Activated CD8-positive, alpha-beta T cell treated with anti-CD3 and anti-CD28 coated beads, Interleukin-2, amount 10 ng/mL, durations not matched to agents 7 days and 5 days (primary cell): ENCODE measurements at regions of chr2 and their contacts with region 1.

Region 1: DNA sequence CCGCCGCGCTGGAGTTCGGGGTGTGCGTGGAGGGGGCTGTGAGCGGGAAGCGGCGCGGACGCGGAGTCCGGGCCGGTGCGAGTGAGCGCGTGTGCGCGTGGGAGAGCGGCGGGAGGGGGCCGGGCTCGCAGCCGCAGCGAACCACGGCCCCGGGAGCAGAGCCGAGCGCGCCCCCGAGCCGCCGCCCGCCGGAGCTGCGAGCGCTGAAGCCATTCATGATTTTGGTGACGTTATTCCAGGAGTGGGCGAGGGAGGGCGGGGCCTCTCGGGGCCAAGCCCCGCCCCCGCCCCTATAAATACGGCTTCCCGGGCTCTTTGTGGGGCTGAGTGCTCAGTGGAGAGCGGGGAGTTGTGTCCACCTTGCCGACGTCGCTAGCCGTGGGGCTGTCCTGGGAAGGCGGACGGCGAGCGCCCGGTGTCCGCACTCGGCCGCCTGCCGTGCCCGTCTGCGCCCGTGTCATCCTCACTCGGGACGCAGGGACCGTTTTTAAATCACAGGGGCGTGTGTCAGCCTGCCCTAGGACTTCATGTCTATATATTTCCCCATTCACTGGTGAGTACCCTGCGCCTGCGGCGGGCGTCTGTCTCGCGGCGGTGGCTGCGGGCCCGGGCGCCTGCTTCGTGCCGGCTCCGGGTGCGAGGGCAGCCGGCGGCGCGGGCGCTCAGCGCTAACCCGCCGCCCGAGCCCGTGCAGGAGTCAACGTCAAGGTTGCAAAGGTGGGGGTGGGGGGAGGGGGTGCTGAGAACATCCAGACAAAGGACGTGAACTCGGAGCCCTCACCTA is at the start of gene LBH:
- DNase-seq: peak; percentile 89
- ATAC-seq: peak; percentile 52
- H3K4me3 Mint-ChIP-seq: peak within 1 kb of the TSS; percentile 73
- H3K27ac Mint-ChIP-seq: peak within 1 kb of the TSS; percentile 93
- H3K4me1 Mint-ChIP-seq: peaks cover 64% of the 10 kb centered on the region
- H3K27me3 Mint-ChIP-seq: peaks cover 5% of the 10 kb centered on the region
- total RNA-seq, gene LBH: 97.0 to 100 TPM

Region 2: DNA sequence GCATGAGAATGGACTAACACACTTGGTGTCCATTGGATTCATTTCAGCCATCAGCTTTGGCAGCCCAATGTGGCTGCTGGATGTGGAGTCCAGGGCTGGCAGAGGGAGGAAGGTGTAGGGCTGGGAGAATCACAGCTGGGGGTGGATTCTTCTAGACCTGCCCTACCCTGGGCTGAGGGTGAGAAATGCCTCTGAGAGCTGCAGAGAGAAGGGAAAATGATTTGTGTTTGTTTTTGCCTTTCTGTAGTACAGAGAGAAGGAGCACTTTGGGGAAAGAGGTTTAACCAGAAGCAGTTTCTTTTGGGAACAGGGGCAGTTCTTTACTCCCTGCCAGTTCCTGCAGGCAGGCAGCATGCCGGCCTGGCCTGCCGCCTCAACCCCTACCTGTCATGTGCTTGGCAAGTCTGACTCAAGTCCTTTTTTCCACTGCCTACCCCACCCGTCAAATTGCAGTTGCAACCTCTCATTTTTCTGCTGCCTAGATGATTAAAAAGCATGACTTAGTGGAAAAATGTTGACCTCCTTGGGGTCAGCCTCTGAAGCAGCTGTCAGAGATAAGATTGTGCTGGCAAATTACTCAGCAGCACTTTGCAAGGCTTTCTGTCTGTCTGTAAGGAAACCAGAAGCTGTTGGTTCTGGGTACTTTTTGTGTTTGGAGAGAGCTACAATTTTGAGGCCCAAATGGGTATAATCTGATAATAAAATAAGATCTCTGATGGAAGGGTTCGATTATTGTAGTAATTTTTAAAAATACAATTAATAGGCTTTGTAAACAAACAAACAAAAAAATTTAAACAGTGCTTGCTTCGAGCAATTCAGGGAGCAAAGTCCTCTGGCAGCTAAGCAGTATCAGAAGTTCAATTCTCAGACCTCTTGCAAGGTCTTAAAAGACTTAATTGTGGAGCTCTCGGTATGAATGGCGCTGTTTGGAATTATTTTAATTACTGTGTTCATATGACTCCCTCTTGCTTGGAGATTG is 21.6 kb after region 1 on chr2:
- CTCF ChIA-PET with region 1: interaction called, 268 read pairs
- POLR2A ChIA-PET with region 1: interaction called, 15 read pairs
- DNase-seq: peak; percentile 69
- ATAC-seq: peak; percentile 65
- H3K4me3 Mint-ChIP-seq: peak overlapping the region; percentile 9
- H3K27ac Mint-ChIP-seq: peak overlapping the region; percentile 75
- H3K4me1 Mint-ChIP-seq: peaks cover 89% of the 10 kb centered on the region
- H3K27me3 Mint-ChIP-seq: no peaks in the 10 kb centered on the region

Region 3: DNA sequence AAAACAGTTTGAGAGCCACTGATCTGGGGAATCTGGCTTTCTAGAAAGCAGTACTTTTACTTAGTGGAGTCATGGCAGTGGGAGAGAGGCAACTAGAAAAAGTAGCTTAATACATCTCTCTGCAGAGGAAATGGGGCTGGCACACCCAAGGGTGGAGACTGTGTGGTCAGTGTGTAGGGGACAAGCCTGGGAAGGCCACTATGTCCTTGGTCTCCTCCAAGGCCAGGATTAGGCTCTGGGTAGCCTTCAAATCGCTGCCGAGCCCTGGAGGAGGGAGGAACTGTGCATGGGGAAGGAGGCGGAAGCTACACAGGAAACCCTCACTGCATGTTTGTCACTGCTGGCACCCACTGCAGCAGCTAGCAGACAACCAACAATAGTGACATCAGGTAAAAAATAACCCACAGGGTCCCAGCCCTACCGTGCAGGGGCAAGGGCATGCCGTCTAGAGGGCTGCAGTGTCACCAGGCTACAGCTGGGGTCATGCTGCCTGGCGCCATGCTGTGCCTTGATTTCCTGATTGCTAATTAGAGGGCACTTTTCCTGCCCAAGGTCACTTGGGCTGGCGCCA is 34.7 kb after region 1 on chr2:
- CTCF ChIA-PET with region 1: interaction called, 268 read pairs
- POLR2A ChIA-PET with region 1: interaction called, 27 read pairs
- DNase-seq: peak; percentile 76
- ATAC-seq: peak; percentile 85
- H3K4me3 Mint-ChIP-seq: peak overlapping the region; percentile 81
- H3K27ac Mint-ChIP-seq: peak overlapping the region; percentile 98
- H3K4me1 Mint-ChIP-seq: peaks cover 72% of the 10 kb centered on the region
- H3K27me3 Mint-ChIP-seq: no peaks in the 10 kb centered on the region

Region 4: GRCh38 chr2:30421604-30422443 is 190.4 kb after region 1 on chr2:
- CTCF ChIA-PET with region 1: interaction called, 4 read pairs
- POLR2A ChIA-PET with region 1: interaction called, 12 read pairs
- DNase-seq: peak; percentile 35
- ATAC-seq: peak; percentile 56
- H3K4me3 Mint-ChIP-seq: peak overlapping the region; percentile 36
- H3K27ac Mint-ChIP-seq: peak overlapping the region; percentile 80
- H3K4me1 Mint-ChIP-seq: peaks cover 32% of the 10 kb centered on the region
- H3K27me3 Mint-ChIP-seq: no peaks in the 10 kb centered on the region

Region 5: GRCh38 chr2:30447149-30448045 is 216.0 kb after region 1 on chr2 and contains the start of gene LCLAT1:
- CTCF ChIA-PET with region 1: interaction called, 4 read pairs
- POLR2A ChIA-PET with region 1: interaction called, 24 read pairs
- DNase-seq: peak; percentile 86
- ATAC-seq: peak; percentile 95
- H3K4me3 Mint-ChIP-seq: peak within 1 kb of the TSS; percentile 93
- H3K27ac Mint-ChIP-seq: peak within 1 kb of the TSS; percentile 97
- H3K4me1 Mint-ChIP-seq: peaks cover 27% of the 10 kb centered on the region
- H3K27me3 Mint-ChIP-seq: no peaks in the 10 kb centered on the region
- total RNA-seq, gene LCLAT1: 25.1 to 25.3 TPM